ENCODE measurements at regions of chr19 and their contacts with region 1.

Region 1: GRCh38 chr19:41993612-41994483 is at the start of gene ATP1A3:
- DNase-seq: peak in 1 of 2 experiments; percentile 33
- H3K4me3 ChIP-seq: peak within 1 kb of the TSS; percentile 38; the same call in 1 of the 2 replicates
- H3K27ac ChIP-seq: no peak within 1 kb of the TSS
- H3K4me1 ChIP-seq: no peaks in the 10 kb centered on the region
- H3K27me3 ChIP-seq: peaks cover 78% of the 10 kb centered on the region
- CTCF ChIP-seq: no peak
- total RNA-seq, gene ATP1A3: not detected in 2 replicates

Region 2: DNA sequence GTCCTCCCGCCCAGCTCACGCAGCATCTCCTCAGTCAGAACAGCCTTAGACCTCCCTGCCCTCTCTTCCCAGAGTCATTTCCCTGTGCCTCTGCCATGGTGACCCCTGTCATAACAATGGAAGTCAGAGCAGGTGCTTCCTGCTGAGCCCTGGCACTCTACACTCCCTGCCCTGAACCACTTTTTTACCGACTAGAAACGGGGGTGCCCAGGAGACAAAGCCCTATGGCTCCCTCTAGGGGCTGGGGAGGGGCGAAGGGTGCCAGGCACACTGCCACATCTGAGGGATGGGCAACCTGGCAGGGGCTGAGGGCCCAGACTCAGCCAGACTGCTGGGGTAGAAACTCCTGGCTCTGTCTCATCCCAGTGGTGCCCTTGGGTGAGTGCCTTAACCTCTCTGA is 98.5 kb after region 1 on chr19:
- CTCF ChIA-PET with region 1: interaction called, 6 read pairs
- POLR2A ChIA-PET with region 1: no interaction called
- intact Hi-C with region 1: loop called (anchors 10 kb)
- DNase-seq: peak; percentile 59 to 71
- H3K4me3 ChIP-seq: no peak overlapping the region
- H3K27ac ChIP-seq: no peak overlapping the region
- H3K4me1 ChIP-seq: 0 out of 2 replicates have a peak, but pooled peaks cover 11% of the 10 kb centered on the region
- H3K27me3 ChIP-seq: no peaks in the 10 kb centered on the region
- CTCF ChIP-seq: peak; percentile 76

Measured in PC-9 (cell line).